ENCODE measurements at regions of chr15 and their contacts with region 1.

Region 1: DNA sequence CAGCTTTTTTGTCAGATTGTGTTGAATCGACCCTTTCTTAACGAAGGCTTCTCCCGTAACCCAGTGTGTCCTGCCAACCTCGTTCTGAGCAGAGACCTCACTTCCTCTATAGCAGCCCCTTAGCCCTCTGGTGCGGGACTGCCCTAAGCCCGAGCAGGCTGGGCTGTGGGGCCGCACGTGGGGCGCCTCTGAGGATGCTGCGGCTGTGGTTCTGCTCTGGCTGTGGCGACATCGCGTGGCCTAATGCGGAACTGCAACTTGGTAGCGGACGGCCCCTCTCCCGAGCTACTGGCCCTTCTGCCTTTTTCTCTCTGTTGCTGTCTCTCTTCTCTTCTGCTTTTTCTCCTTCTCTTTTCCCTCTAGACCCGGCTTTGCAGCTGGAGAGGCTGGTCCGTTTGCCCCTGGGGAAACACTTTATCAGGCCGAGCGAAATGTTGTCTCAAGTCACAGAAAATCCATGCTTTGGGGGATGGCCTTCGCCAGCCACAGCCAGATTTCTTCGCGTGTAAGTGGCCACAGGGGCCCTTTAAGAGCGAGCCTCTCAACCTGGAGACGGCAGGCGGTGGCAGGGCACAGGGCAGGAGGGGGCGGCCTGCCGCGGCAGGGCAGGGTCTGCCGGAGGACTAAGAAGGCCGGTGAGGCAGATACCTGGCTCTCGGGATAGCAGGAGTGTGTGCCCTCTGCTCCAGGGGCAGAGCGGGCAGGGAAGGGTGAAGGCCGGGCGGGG is 19.4 kb upstream of the KIF23 start:
- DNase-seq: peak; percentile 71 to 87
- H3K4me3 ChIP-seq: no peak overlapping the region
- H3K4me3 Mint-ChIP-seq: no peak overlapping the region
- H3K27ac Mint-ChIP-seq: peak overlapping the region; percentile 56
- H3K4me1 ChIP-seq: peaks cover 14% of the 10 kb centered on the region; the same call in 1 of the 2 replicates
- H3K4me1 Mint-ChIP-seq: peaks cover 20% of the 10 kb centered on the region
- H3K27me3 ChIP-seq: no peaks in the 10 kb centered on the region
- H3K27me3 Mint-ChIP-seq: no peaks in the 10 kb centered on the region
- CTCF ChIP-seq: peak; percentile 90 to 94

Region 2: GRCh38 chr15:69031013-69032001 is 363.4 kb before region 1 on chr15:
- CTCF ChIA-PET with region 1: no interaction called
- POLR2A ChIA-PET with region 1: no interaction called
- intact Hi-C with region 1: no loop called
- DNase-seq: peak in 1 of 2 experiments; percentile 36
- H3K4me3 ChIP-seq: peak overlapping the region; percentile 26
- H3K4me3 Mint-ChIP-seq: no peak overlapping the region
- H3K27ac Mint-ChIP-seq: no peak overlapping the region
- H3K4me1 ChIP-seq: no peaks in the 10 kb centered on the region
- H3K4me1 Mint-ChIP-seq: no peaks in the 10 kb centered on the region
- H3K27me3 ChIP-seq: no peaks in the 10 kb centered on the region; the same call in 1 of the 2 replicates
- H3K27me3 Mint-ChIP-seq: no peaks in the 10 kb centered on the region
- CTCF ChIP-seq: peak in 1 of 2 experiments; percentile 34

Region 3: GRCh38 chr15:69141286-69141701 is 253.4 kb before region 1 on chr15:
- CTCF ChIA-PET with region 1: no interaction called
- POLR2A ChIA-PET with region 1: no interaction called
- intact Hi-C with region 1: loop called (anchors 5 kb)
- DNase-seq: no peak
- H3K4me3 ChIP-seq: no peak overlapping the region
- H3K4me3 Mint-ChIP-seq: no peak overlapping the region
- H3K27ac Mint-ChIP-seq: no peak overlapping the region
- H3K4me1 ChIP-seq: 0 out of 2 replicates have a peak, but pooled peaks cover 2% of the 10 kb centered on the region
- H3K4me1 Mint-ChIP-seq: peaks cover 7% of the 10 kb centered on the region
- H3K27me3 ChIP-seq: peaks cover 1% of the 10 kb centered on the region; the same call in 1 of the 2 replicates
- H3K27me3 Mint-ChIP-seq: peaks cover 14% of the 10 kb centered on the region
- CTCF ChIP-seq: peak in 1 of 2 experiments; percentile 35

Region 4: GRCh38 chr15:69185706-69186105 is 209.0 kb before region 1 on chr15:
- CTCF ChIA-PET with region 1: no interaction called
- POLR2A ChIA-PET with region 1: no interaction called
- intact Hi-C with region 1: no loop called
- DNase-seq: no peak
- H3K4me3 ChIP-seq: no peak overlapping the region
- H3K4me3 Mint-ChIP-seq: no peak overlapping the region
- H3K27ac Mint-ChIP-seq: no peak overlapping the region
- H3K4me1 ChIP-seq: no peaks in the 10 kb centered on the region
- H3K4me1 Mint-ChIP-seq: no peaks in the 10 kb centered on the region
- H3K27me3 ChIP-seq: no peaks in the 10 kb centered on the region
- H3K27me3 Mint-ChIP-seq: no peaks in the 10 kb centered on the region
- CTCF ChIP-seq: no peak

Region 5: DNA sequence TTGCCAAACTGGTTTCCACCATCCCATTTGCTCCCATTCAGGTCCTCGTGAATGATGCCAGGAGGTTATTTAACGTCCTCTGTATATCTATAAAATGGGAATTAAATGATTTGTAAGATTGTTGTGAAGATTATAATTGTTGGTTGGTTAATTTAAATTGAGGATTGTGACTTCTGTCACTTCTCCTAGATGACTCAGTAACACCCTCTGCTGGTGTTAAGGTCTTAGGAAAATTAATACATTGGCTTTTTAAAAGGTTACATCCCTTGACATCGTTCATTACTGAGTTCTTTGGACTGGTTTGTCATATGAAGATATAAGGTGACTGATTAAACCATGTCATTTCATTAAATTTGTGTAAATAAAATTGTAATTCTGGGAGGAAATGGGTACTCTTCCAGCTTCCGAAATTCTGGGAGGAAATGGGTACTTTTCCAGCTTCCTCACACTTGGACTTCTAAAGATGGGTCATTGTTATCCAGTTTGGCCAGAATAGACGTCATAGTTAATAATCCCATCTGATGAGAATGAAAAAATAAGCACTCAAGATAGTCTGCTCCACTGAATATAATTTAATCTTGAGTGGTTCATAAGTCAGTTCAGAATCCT is 129.3 kb before region 1 on chr15:
- CTCF ChIA-PET with region 1: interaction called, 10 read pairs
- POLR2A ChIA-PET with region 1: no interaction called
- intact Hi-C with region 1: no loop called
- DNase-seq: peak in 1 of 2 experiments; percentile 23
- H3K4me3 ChIP-seq: no peak overlapping the region
- H3K4me3 Mint-ChIP-seq: no peak overlapping the region
- H3K27ac Mint-ChIP-seq: no peak overlapping the region
- H3K4me1 ChIP-seq: no peaks in the 10 kb centered on the region
- H3K4me1 Mint-ChIP-seq: no peaks in the 10 kb centered on the region
- H3K27me3 ChIP-seq: no peaks in the 10 kb centered on the region
- H3K27me3 Mint-ChIP-seq: no peaks in the 10 kb centered on the region
- CTCF ChIP-seq: peak; percentile 50 to 53

Region 6: GRCh38 chr15:69298697-69299441 is 95.8 kb before region 1 on chr15 and contains the start of gene PAQR5:
- CTCF ChIA-PET with region 1: no interaction called
- POLR2A ChIA-PET with region 1: no interaction called
- intact Hi-C with region 1: loop called (anchors 10 kb)
- DNase-seq: peak in 1 of 2 experiments; percentile 62
- H3K4me3 ChIP-seq: peak within 1 kb of the TSS; percentile 54
- H3K4me3 Mint-ChIP-seq: peak within 1 kb of the TSS; percentile 69
- H3K27ac Mint-ChIP-seq: no peak within 1 kb of the TSS
- H3K4me1 ChIP-seq: peaks cover 7% of the 10 kb centered on the region; the same call in 1 of the 2 replicates
- H3K4me1 Mint-ChIP-seq: peaks cover 13% of the 10 kb centered on the region
- H3K27me3 ChIP-seq: no peaks in the 10 kb centered on the region
- H3K27me3 Mint-ChIP-seq: peaks cover 3% of the 10 kb centered on the region
- CTCF ChIP-seq: no peak
- total RNA-seq, gene PAQR5: 3.4 and 5.4 TPM in 2 replicates

Region 7: GRCh38 chr15:69502470-69503045 is 107.8 kb after region 1 on chr15:
- CTCF ChIA-PET with region 1: no interaction called
- POLR2A ChIA-PET with region 1: no interaction called
- intact Hi-C with region 1: no loop called
- DNase-seq: no peak
- H3K4me3 ChIP-seq: no peak overlapping the region
- H3K4me3 Mint-ChIP-seq: no peak overlapping the region
- H3K27ac Mint-ChIP-seq: no peak overlapping the region
- H3K4me1 ChIP-seq: no peaks in the 10 kb centered on the region
- H3K4me1 Mint-ChIP-seq: peaks cover 5% of the 10 kb centered on the region
- H3K27me3 ChIP-seq: no peaks in the 10 kb centered on the region
- H3K27me3 Mint-ChIP-seq: no peaks in the 10 kb centered on the region
- CTCF ChIP-seq: no peak

Region 8: DNA sequence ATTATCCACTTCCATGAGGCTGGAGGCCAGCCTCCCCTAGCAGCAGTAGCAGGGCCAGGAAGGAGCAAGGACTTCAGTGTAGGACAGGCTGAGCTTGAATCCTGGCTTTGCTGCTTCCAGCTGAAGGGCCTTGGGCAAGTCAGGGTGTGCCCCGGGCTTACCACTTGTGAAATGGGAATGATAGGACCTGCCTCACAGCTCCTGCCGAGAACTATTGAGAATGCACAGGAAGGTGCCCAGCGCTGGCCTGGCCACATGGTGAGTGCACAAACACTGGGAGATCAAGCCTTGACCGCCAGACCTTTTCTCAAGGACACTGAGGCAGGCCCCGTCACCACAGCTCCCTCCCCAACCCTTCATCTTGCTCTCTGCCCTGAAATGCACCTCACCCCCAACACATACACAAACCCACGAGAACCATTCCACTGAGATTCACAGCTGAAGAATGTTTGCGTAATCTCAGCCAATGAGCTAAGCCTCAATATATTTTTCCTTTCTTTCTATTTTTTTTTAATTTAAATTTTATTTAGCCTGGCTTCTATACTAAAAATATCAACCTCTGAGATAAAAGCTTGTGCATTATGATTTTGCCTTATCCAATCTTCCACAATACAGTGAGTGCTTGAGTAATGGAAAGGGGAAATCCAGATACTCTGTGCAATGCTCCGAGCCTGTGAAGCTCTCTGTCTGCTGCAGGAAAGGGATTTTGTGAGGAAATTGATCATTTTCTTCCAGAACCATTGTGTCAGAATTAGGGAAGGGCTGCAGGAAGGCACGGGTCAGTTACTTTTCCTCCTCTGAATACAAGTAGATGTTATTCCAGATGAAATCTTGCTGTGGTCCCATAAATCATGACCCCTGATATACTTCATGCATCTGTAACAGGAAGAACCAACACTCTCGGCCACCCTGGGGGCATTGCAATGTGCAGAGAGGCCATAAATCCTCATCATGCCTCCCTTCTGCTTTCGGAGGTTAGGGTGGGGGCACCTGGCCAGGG is 509.1 kb after region 1 on chr15:
- CTCF ChIA-PET with region 1: no interaction called
- POLR2A ChIA-PET with region 1: no interaction called
- intact Hi-C with region 1: no loop called
- DNase-seq: no peak
- H3K4me3 ChIP-seq: no peak overlapping the region
- H3K4me3 Mint-ChIP-seq: no peak overlapping the region
- H3K27ac Mint-ChIP-seq: no peak overlapping the region
- H3K4me1 ChIP-seq: no peaks in the 10 kb centered on the region
- H3K4me1 Mint-ChIP-seq: no peaks in the 10 kb centered on the region
- H3K27me3 ChIP-seq: no peaks in the 10 kb centered on the region
- H3K27me3 Mint-ChIP-seq: peaks cover 6% of the 10 kb centered on the region
- CTCF ChIP-seq: no peak